Left ventricle myocardium superior (tissue), 1 donor: ENCODE measurements at regions of chr3 and their contacts with region 1.

Region 1: GRCh38 chr3:141192345-141192744 is 39.3 kb upstream of the PXYLP1 start:
- DNase-seq: peak; percentile 98
- ATAC-seq: peak; percentile 100

Region 2: GRCh38 chr3:141000027-141000663 is 192.2 kb before region 1 on chr3:
- intact Hi-C with region 1: loop called (anchors 5 kb)
- DNase-seq: peak; percentile 75
- ATAC-seq: peak; percentile 99

Region 3: DNA sequence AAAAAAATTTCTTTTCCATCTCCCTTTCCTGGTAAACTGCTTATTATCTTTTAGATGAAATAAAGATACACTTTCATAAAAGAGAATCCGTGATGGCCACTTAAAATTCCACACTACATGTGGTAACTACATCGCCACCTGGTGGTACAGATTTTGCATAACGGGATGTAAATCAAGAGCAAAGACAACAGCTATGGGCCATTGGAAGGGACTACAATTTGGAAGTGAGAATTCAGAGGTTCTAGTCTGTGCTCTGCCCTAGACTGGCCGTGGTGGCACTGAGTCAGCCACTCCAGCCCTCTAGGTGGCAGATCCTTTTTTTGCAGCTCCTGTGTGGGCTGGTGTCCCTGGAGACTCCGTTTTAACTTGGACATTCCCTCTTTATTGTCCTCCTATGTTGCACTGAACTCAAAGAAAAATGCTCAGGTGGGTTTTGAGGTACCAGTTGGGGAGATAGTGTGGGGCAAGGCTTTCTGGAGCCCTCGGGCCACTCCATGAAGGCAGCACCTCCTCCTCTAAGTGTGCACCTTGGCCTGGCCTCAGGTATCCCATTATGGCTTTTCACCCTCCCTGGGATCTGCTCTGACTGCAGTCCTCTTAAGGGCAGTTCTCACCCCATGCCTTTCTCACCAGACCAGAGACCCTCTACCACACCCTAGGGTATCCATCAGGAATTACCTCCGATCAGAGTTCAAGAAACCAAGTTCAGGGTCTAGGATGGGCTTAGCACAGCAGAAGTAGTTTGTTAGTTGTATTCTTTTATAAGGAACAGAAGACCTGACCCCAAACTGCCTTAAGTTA is 86.3 kb before region 1 on chr3:
- intact Hi-C with region 1: no loop called
- DNase-seq: no peak
- ATAC-seq: peak; percentile 8